PC-3 (cell line): ENCODE measurements at regions of chrX and their contacts with region 1.

Region 1: DNA sequence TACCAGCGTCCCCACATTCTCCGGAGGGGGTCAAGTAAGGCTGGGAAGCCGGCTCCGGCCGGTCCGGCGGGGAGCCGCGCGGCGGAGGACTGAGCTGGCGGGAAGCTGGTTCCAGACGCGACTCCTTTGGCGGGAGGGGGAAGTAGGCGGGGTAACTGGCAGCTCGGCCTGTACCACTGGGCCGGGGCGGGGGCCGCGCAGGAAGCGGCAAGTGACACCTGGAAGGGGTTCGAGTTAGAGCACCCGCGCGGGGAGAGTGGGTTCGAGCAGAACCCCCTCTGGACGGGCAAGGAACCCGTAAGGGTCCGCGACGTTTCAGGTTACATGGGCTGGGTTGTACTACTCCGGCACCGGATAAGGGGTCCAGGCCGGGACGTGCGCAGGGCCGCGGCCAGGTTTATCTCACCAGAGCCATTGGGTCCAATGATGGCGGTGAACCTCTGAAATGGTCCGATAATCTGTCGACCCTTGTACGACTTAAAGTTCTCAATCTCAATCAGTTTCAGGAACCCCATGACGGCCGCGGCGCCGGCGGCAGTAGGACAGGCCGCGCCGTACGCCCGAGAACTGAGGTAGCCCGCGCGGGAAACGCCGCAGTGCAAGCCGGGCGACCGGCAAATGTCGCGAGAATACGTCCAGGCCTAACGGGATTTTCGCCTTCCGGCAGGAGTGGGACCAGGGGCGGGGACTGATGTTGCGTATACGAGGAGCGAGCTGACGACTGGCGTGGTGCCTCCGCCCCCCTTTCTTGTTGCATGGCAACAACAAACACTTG is at the start of gene SMC1A:
- DNase-seq: peak; percentile 98
- ATAC-seq: peak; percentile 95
- H3K4me3 ChIP-seq: peak within 1 kb of the TSS; percentile 92
- H3K27ac ChIP-seq: peak within 1 kb of the TSS; percentile 93
- H3K4me1 ChIP-seq: peaks cover 7% of the 10 kb centered on the region
- H3K27me3 ChIP-seq: no peaks in the 10 kb centered on the region
- CTCF ChIP-seq: no peak
- total RNA-seq, gene SMC1A: 47.6 and 48.1 TPM in 2 replicates

Region 2: DNA sequence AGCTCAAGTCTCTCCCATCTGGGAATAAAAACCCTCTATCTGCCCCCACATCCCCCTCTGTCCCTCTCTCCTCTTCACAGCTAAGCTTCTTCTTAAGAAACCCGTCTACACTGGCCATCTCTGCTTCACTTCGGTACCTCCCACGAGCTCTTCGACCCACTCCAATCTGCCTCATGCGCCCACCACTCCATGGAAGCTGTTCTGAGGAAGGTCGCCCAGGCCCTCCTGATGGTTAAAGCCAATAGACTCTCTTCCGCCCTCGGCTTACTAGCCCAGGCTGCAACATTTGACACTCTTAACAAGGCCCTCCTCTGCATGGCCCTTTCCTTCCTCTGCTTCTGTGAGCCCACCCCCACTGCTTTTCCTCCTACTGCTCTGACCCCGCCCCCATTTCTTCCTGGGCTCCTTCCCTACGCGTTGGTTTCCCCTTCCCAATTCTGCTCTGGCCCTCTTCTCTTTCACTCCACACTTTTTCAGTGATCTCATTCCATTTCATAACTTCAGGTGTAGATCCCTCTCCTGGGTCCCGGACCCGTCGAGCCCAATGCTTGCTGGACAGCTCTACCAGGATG is 152.7 kb before region 1 on chrX:
- CTCF ChIA-PET with region 1: no interaction called
- POLR2A ChIA-PET with region 1: no interaction called
- intact Hi-C with region 1: no loop called
- DNase-seq: no peak
- ATAC-seq: no peak
- H3K4me3 ChIP-seq: no peak overlapping the region
- H3K27ac ChIP-seq: no peak overlapping the region
- H3K4me1 ChIP-seq: peaks cover 32% of the 10 kb centered on the region
- H3K27me3 ChIP-seq: no peaks in the 10 kb centered on the region
- CTCF ChIP-seq: no peak

Region 3: GRCh38 chrX:53441531-53442321 is 19.5 kb after region 1 on chrX:
- CTCF ChIA-PET with region 1: interaction called, 7 read pairs
- POLR2A ChIA-PET with region 1: interaction called, 3 read pairs
- intact Hi-C with region 1: loop called (anchors 2 kb)
- DNase-seq: peak; percentile 92
- ATAC-seq: peak; percentile 66
- H3K4me3 ChIP-seq: peak overlapping the region; percentile 68
- H3K27ac ChIP-seq: peak overlapping the region; percentile 82
- H3K4me1 ChIP-seq: peaks cover 12% of the 10 kb centered on the region
- H3K27me3 ChIP-seq: no peaks in the 10 kb centered on the region
- CTCF ChIP-seq: no peak

Region 4: DNA sequence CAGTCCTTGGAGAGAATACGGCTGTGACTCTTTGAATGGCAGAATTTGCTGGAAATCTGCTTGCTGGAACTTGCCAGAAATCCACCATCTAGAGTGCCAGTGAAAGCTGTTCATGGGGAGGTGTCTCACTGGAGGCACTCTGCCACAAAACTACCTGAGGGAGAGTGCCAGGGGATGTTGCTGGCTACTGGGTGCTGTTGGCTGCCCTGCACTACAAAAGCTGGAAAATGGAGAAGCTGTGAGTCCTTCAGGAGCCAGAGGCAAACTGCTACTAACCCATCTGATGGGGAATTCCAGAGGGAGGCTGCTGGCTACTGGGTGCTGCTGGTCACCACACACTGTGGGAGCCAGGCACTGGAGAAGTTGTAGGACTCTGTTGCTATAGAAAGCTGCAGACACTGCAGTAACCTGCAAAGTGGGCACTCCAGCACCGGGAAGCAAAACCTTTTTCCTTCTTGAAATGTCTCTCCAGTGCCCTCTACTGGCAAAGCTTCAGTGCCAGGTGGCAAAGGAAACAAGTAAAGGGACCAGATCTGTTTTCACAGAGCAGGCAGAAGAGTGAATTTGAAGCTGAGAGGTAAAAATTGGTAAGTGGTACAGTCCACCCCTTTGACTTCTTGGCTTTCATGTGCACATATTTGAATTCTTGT is 59.7 kb after region 1 on chrX:
- CTCF ChIA-PET with region 1: interaction called, 11 read pairs
- POLR2A ChIA-PET with region 1: no interaction called
- intact Hi-C with region 1: no loop called
- DNase-seq: peak; percentile 81
- ATAC-seq: peak; percentile 80
- H3K4me3 ChIP-seq: 0 out of 2 replicates have a peak overlapping the region, but pooled peaks have one; percentile 14
- H3K27ac ChIP-seq: no peak overlapping the region
- H3K4me1 ChIP-seq: 0 out of 2 replicates have a peak, but pooled peaks cover 5% of the 10 kb centered on the region
- H3K27me3 ChIP-seq: no peaks in the 10 kb centered on the region
- CTCF ChIP-seq: peak; percentile 85